OCI-LY7 (cell line): ENCODE measurements at regions of chr3 and their contacts with region 1.

Region 1: GRCh38 chr3:76044601-76045600 is 259.6 kb upstream of the ZNF717 start:
- DNase-seq: peak; percentile 27
- H3K4me3 ChIP-seq: no peak overlapping the region
- H3K27ac ChIP-seq: no peak overlapping the region
- H3K4me1 ChIP-seq: no peaks in the 10 kb centered on the region
- CTCF ChIP-seq: peak; percentile 92

Region 2: GRCh38 chr3:75727985-75728384 is 316.9 kb before region 1 on chr3:
- CTCF ChIA-PET with region 1: no interaction called
- POLR2A ChIA-PET with region 1: no interaction called
- intact Hi-C with region 1: loop called (anchors 10 kb)
- DNase-seq: no peak
- H3K4me3 ChIP-seq: no peak overlapping the region
- H3K27ac ChIP-seq: no peak overlapping the region
- H3K4me1 ChIP-seq: no peaks in the 10 kb centered on the region
- CTCF ChIP-seq: no peak

Region 3: GRCh38 chr3:76063019-76063418 is 18.1 kb after region 1 on chr3:
- CTCF ChIA-PET with region 1: no interaction called
- POLR2A ChIA-PET with region 1: no interaction called
- intact Hi-C with region 1: no loop called
- DNase-seq: no peak
- H3K4me3 ChIP-seq: no peak overlapping the region
- H3K27ac ChIP-seq: no peak overlapping the region
- H3K4me1 ChIP-seq: no peaks in the 10 kb centered on the region
- CTCF ChIP-seq: no peak